H1 (cell line): ENCODE measurements at regions of chr1 and their contacts with region 1.

Region 1: DNA sequence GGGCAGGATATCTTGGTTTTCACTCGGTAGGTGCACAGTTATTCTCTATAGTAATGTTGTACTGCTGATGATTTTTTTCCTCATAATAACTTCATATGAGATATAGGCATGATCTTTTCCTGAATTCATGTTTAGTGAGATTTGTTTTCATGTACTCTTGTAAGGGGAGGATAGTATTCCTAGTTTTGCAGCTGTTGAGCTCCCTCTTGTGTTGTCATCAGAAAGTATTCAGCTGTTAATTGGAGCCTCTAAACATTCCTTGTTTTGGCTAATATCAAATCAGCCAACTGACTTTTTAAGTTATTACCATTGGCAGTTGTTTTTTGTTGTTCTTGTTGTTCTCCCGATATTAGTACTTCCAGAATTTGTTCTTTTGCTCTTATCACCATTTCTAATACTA is 24.4 kb downstream of the OR10R2 start:
- DNase-seq: no peak
- H3K4me3 ChIP-seq: no peak overlapping the region
- H3K27ac ChIP-seq: no peak overlapping the region
- H3K4me1 ChIP-seq: no peaks in the 10 kb centered on the region
- H3K27me3 ChIP-seq: no peaks in the 10 kb centered on the region
- CTCF ChIP-seq: peak in 2 of 3 experiments; percentile 45 to 60; a peak in 2 of 4 replicates
- EP300 ChIP-seq: no peak
- POLR2A ChIP-seq: no peak
- RAD21 ChIP-seq: peak; percentile 85 to 88

Region 2: DNA sequence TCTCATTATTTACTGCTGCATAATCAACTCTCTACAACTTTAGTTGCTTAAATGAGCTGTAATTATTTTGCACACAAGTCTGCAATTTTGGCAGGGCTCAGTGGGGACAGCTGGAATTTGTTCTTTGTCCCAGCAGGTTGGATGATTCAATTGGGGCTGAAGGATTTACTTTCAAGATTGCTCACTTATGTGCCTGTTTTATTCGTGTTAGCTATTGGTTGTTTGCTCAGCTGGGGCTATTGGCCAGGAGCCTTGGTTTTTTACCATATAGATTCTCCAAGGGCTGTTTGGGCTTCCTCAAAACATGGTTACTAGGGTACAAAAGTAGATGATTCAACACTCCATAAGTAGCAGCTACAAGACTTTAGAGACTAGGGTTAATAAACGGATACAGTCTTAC is 10.9 kb before region 1 on chr1:
- CTCF ChIA-PET with region 1: interaction called, 17 read pairs
- POLR2A ChIA-PET with region 1: no interaction called
- DNase-seq: no peak
- H3K4me3 ChIP-seq: no peak overlapping the region
- H3K27ac ChIP-seq: no peak overlapping the region
- H3K4me1 ChIP-seq: no peaks in the 10 kb centered on the region
- H3K27me3 ChIP-seq: no peaks in the 10 kb centered on the region
- CTCF ChIP-seq: no peak
- EP300 ChIP-seq: no peak
- POLR2A ChIP-seq: no peak
- RAD21 ChIP-seq: no peak